Left ventricle myocardium superior (tissue), 1 donor: ENCODE measurements at regions of chr7 and their contacts with region 1.

Region 1: GRCh38 chr7:134605973-134606923 is 40.4 kb upstream of the BPGM start:
- DNase-seq: peak; percentile 62
- ATAC-seq: peak; percentile 93

Region 2: DNA sequence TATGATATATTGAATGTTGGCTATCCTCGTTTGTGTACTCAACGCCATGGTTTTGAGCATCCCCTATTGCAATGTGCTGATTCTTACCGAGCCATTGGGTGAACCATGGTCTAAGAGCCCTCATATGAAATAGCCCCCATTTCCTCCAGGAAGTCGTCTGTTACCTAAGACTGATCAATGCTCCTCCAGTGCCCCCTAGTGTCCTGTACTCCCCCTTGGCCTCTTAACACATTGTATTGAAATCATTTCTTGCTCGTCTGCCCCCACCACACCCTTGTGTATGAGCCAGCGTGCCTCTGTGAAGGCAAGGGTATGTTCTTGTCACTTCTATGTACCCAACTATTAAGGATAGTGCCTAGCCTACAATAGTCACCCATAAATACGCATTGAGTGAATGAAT is 278.4 kb before region 1 on chr7:
- intact Hi-C with region 1: no loop called
- DNase-seq: no peak
- ATAC-seq: no peak

Region 3: DNA sequence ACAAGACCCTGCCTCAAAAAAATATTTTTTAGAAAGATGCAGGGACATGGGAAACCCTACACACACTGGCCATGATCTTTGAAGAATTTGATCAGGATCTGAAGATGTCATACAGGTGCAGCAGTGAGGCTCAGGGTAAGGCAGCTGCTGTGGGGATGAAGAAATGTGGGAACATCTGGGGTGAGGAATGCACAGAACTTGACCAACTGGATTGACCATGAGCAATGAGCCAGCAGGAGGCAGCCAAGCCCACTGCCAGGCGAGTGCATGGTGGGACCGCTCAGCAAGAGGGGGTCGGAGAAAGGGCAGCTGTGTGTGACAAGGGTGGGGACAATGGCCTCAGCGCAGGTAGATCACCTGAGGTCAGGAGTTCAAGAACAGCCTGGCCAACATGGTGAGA is 202.6 kb before region 1 on chr7:
- intact Hi-C with region 1: no loop called
- DNase-seq: no peak
- ATAC-seq: no peak

Region 4: GRCh38 chr7:134514663-134515062 is 91.6 kb before region 1 on chr7:
- intact Hi-C with region 1: loop called (anchors 5 kb)
- DNase-seq: no peak
- ATAC-seq: peak; percentile 56

Region 5: DNA sequence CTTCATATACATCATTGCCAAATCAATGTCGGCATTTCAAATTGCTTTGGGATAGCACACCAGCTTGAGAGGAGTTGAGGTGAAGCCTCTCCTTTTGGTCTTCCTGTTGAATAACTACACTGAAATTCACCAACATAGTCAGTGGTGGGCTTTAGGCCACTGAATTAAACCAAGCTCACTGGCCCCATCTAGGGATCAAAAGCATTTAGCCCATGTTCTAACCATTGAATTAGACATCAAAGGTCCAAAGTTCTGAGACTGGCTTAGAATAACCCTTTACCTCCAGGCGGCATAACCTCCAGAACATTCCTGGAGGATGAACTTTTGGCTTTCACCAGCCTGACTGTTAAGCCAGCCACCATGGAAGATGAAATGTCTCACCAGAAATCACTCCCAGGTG is 95.0 kb after region 1 on chr7:
- intact Hi-C with region 1: no loop called
- DNase-seq: no peak
- ATAC-seq: no peak